ENCODE measurements at regions of chr1 and their contacts with region 1.

Region 1: GRCh38 chr1:109213785-109214468 is at the start of gene SARS1:
- DNase-seq: peak; percentile 89
- ATAC-seq: peak; percentile 86
- H3K4me3 Mint-ChIP-seq: peak within 1 kb of the TSS; percentile 100
- H3K27ac Mint-ChIP-seq: peak within 1 kb of the TSS; percentile 99
- H3K4me1 Mint-ChIP-seq: peaks cover 29% of the 10 kb centered on the region
- H3K27me3 Mint-ChIP-seq: no peaks in the 10 kb centered on the region
- CTCF ChIP-seq: no peak
- total RNA-seq, gene SARS1: 226 to 228 TPM

Region 2: DNA sequence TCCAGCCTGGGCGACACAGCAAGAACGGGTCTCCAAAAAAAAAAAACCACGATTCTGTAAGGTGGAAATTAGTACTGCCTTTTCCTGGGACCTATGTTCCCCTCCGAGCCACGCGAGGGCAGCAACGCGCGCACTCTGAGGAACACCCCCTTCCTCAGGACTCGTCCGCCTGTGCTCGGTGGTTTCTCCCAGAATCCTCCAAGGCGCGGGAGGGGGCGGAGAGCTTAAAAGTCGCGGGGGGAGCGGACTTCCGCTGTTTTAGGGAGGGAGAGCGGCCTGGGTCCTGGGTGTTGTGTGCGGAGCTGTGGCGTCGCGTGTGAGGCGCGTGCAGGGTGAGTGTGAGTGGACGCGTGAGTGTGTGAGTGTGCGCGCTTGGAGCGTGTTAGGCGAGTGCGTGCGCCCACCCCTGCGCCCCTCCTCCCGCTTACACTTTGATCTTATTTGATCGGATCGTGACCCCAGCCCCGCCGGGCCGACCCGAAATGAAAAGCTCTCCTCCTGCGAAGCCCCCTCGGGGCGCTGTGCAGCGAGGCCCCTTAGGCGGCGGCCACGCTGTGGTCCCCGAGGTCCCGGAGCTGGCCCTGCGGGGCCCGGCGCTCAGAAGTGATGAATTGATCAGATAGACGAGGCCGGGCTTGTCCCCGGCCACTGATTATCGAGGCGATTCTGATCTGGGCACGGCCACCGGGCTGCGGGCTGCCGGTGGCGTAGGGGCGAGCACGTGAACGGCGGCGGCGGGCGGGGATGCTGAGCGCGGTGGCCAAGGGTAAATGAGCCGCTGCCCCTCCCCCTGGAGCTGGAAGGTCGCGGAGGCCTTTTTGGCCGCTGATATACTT is 113.8 kb before region 1 on chr1:
- CTCF ChIA-PET with region 1: interaction called, 11 read pairs
- POLR2A ChIA-PET with region 1: interaction called, 11 read pairs
- intact Hi-C with region 1: no loop called
- DNase-seq: peak; percentile 98
- ATAC-seq: peak; percentile 94
- H3K4me3 Mint-ChIP-seq: peak overlapping the region; percentile 98
- H3K27ac Mint-ChIP-seq: peak overlapping the region; percentile 98
- H3K4me1 Mint-ChIP-seq: peaks cover 5% of the 10 kb centered on the region
- H3K27me3 Mint-ChIP-seq: no peaks in the 10 kb centered on the region
- CTCF ChIP-seq: peak; percentile 73

Region 3: DNA sequence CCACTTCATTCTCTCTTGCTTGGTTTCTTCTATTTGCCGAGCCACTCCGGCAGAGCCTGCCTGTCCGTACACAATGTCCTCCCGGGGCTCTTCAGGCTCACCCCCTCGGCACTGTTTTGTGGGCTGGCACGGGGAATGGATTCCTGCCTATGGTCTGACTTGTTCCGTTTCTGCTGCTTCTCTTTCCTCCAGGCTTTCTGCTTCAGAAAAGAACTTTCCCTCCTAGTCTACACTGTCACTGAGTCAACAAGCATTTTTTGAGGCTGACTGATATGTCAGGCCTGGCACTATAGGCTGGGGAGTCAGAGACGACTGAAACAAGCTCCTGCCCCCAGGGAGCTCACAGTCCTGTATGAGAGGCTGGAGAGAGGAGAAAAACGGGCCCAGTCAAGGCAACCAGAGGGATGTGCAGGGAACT is 28.5 kb before region 1 on chr1:
- CTCF ChIA-PET with region 1: no interaction called
- POLR2A ChIA-PET with region 1: no interaction called
- intact Hi-C with region 1: no loop called
- DNase-seq: no peak
- ATAC-seq: no peak
- H3K4me3 Mint-ChIP-seq: no peak overlapping the region
- H3K27ac Mint-ChIP-seq: no peak overlapping the region
- H3K4me1 Mint-ChIP-seq: no peaks in the 10 kb centered on the region
- H3K27me3 Mint-ChIP-seq: no peaks in the 10 kb centered on the region
- CTCF ChIP-seq: no peak

Region 4: DNA sequence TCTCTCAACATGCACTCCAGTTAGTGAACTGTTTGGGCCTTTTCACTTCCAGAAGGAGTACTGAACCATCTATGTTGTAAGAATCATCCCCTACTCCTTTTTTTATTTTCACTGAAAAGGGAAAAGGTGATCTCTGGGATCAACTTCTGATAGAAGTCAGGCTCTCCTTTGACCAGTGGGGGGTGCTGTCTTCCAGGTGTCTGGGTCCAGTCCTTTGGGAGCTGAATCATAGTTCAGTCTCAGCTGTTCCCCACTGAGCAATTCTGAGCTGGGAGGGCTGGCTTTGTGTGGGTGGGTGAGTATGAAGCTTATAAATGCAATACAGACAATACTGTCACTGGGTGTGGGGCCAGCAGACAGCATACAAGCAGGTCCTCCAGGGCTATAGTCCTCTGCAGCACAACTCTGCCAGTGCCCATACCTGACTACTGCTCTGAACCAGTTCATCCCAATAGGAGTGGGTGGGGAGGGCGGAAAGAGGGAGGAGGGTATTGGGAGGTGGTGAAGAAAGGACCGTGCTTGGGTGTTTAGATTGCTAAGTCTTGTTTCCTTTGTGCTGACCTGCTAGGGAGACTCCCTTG is 12.7 kb before region 1 on chr1:
- CTCF ChIA-PET with region 1: interaction called, 39 read pairs
- POLR2A ChIA-PET with region 1: interaction called, 10 read pairs
- intact Hi-C with region 1: no loop called
- DNase-seq: peak; percentile 93
- ATAC-seq: peak; percentile 96
- H3K4me3 Mint-ChIP-seq: no peak overlapping the region
- H3K27ac Mint-ChIP-seq: no peak overlapping the region
- H3K4me1 Mint-ChIP-seq: peaks cover 19% of the 10 kb centered on the region
- H3K27me3 Mint-ChIP-seq: no peaks in the 10 kb centered on the region
- CTCF ChIP-seq: peak; percentile 69

Region 5: DNA sequence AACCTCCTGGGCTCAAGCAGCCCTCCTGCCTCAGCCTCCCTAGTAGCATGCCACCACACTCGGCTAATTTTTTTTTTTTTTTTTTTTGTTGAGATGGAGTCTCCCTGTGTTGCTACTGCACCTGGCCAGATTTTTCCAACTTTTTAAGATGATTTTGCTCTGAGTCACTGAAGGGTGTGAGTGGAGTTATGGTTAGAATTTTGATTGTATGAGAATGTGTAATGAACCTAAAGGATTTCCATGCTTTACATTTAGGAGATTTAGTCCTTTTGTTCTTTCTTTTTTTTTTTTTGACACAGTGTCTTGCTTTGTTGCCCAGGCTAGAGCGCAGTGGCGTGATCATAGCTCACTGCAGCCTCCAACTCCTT is 12.1 kb after region 1 on chr1:
- CTCF ChIA-PET with region 1: interaction called, 7 read pairs
- POLR2A ChIA-PET with region 1: interaction called, 28 read pairs
- intact Hi-C with region 1: no loop called
- DNase-seq: no peak
- ATAC-seq: no peak
- H3K4me3 Mint-ChIP-seq: no peak overlapping the region
- H3K27ac Mint-ChIP-seq: no peak overlapping the region
- H3K4me1 Mint-ChIP-seq: peaks cover 33% of the 10 kb centered on the region
- H3K27me3 Mint-ChIP-seq: no peaks in the 10 kb centered on the region
- CTCF ChIP-seq: no peak

Region 6: GRCh38 chr1:109239580-109240095 is 25.7 kb after region 1 on chr1:
- CTCF ChIA-PET with region 1: interaction called, 6 read pairs
- POLR2A ChIA-PET with region 1: interaction called, 18 read pairs
- intact Hi-C with region 1: no loop called
- DNase-seq: peak; percentile 58
- ATAC-seq: peak; percentile 77
- H3K4me3 Mint-ChIP-seq: no peak overlapping the region
- H3K27ac Mint-ChIP-seq: peak overlapping the region; percentile 27
- H3K4me1 Mint-ChIP-seq: peaks cover 14% of the 10 kb centered on the region
- H3K27me3 Mint-ChIP-seq: peaks cover 3% of the 10 kb centered on the region
- CTCF ChIP-seq: peak; percentile 37

Region 7: GRCh38 chr1:109263597-109264398 is 49.9 kb after region 1 on chr1:
- CTCF ChIA-PET with region 1: interaction called, 4 read pairs
- POLR2A ChIA-PET with region 1: no interaction called
- intact Hi-C with region 1: loop called (anchors 5 kb)
- DNase-seq: peak; percentile 89
- ATAC-seq: peak; percentile 99
- H3K4me3 Mint-ChIP-seq: peak overlapping the region; percentile 12
- H3K27ac Mint-ChIP-seq: peak overlapping the region; percentile 76
- H3K4me1 Mint-ChIP-seq: peaks cover 2% of the 10 kb centered on the region
- H3K27me3 Mint-ChIP-seq: no peaks in the 10 kb centered on the region
- CTCF ChIP-seq: peak; percentile 97

Region 8: GRCh38 chr1:109426278-109427170 is 212.6 kb after region 1 on chr1 and contains the start of gene PSMA5:
- CTCF ChIA-PET with region 1: no interaction called
- POLR2A ChIA-PET with region 1: interaction called, 10 read pairs
- intact Hi-C with region 1: no loop called
- DNase-seq: peak; percentile 98
- ATAC-seq: peak; percentile 94
- H3K4me3 Mint-ChIP-seq: peak within 1 kb of the TSS; percentile 93
- H3K27ac Mint-ChIP-seq: peak within 1 kb of the TSS; percentile 96
- H3K4me1 Mint-ChIP-seq: peaks cover 28% of the 10 kb centered on the region
- H3K27me3 Mint-ChIP-seq: no peaks in the 10 kb centered on the region
- CTCF ChIP-seq: no peak
- total RNA-seq, gene PSMA5: 192 to 210 TPM

Measured in activated CD8-positive, alpha-beta T cell treated with anti-CD3 and anti-CD28 coated beads for 36 hours (primary cell).